ENCODE measurements at regions of chr1 and their contacts with region 1.

Region 1: DNA sequence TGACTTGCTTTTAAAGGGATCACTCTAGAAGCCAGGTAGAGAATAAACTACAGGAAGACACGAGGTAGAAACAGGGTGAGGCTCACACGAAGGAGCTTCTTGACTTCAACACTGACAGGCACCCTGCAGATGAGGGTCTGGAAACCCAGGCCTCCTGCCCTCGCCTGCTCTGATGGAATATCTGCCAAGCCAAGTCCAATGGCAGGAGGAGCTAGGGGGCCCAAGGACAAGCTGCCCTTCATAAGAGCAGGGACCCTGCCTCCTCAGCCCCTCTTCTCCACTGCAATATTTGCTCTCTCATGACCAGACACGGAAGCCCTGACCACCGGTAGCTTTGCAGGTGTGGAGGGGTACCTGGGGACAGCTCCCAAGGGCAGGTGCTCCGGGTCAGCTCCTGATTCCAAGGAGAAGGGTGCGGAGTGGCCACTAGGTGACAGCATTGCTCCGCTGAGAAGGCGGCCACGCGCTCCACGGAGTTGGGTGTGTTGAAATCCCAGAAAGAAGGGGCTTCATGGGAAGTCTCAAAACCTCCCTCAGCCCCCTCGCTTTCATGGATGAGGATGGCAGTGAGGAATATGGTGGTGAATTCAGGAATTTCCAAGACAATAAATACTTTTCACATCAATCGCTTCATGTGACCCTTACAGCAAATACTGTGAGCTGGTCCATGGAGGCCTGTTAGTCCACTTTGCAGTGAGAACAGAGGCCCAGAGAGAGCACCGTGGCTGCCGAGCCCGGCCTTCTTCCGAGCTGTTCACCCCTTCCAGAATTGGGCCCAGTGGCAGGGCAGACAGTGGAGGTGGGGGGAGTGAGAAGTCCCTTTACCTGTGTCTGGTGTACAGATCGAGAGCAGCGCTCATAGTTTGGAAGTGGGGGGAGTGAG is 33.2 kb upstream of the PAX7 start:
- DNase-seq: peak; percentile 33 to 41
- ATAC-seq: peak; percentile 95 to 96
- H3K4me3 ChIP-seq: no peak overlapping the region
- H3K27ac ChIP-seq: 0 out of 6 replicates have a peak overlapping the region, but pooled peaks of 1 of the 2 experiments have one; percentile 8
- H3K4me1 ChIP-seq: 0 out of 3 replicates have a peak, but pooled peaks cover 3% of the 10 kb centered on the region
- CTCF ChIP-seq: peak; percentile 87
- EP300 ChIP-seq: no peak
- POLR2A ChIP-seq: no peak
- RAD21 ChIP-seq: peak; percentile 96 to 98

Region 2: GRCh38 chr1:18539171-18539570 is 58.2 kb before region 1 on chr1:
- CTCF ChIA-PET with region 1: no interaction called
- POLR2A ChIA-PET with region 1: no interaction called
- DNase-seq: no peak
- ATAC-seq: no peak
- H3K4me3 ChIP-seq: no peak overlapping the region
- H3K27ac ChIP-seq: no peak overlapping the region
- H3K4me1 ChIP-seq: no peaks in the 10 kb centered on the region
- CTCF ChIP-seq: no peak
- EP300 ChIP-seq: no peak
- POLR2A ChIP-seq: no peak
- RAD21 ChIP-seq: no peak

Region 3: DNA sequence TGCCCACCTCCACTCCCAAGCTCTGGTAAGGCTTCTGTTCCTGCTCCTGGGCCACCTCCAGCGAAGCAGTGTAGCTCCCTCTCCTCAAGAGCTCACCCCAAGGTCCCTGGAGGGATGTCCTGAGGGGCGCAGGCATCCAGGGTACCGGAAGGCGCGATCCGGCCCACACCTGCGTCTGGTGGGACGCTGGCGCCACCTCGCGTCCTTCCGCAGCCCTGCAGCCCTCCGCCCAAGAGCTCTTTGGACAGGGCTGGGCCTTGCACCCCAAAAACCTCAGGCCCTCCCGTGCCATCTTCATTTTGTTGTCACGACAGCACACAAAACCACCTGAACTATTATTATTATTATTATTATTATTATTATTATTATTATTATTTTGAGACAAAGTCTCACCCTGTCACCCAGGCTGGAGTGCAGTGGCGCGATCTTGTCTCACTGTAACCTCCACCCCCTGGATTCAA is 16.0 kb before region 1 on chr1:
- CTCF ChIA-PET with region 1: interaction called, 76 read pairs
- POLR2A ChIA-PET with region 1: no interaction called
- DNase-seq: peak; percentile 37 to 55
- ATAC-seq: peak; percentile 67 to 90; a peak in 5 of 6 replicates
- H3K4me3 ChIP-seq: no peak overlapping the region
- H3K27ac ChIP-seq: no peak overlapping the region
- H3K4me1 ChIP-seq: no peaks in the 10 kb centered on the region
- CTCF ChIP-seq: peak; percentile 70
- EP300 ChIP-seq: no peak
- POLR2A ChIP-seq: no peak
- RAD21 ChIP-seq: peak; percentile 85 to 87

Region 4: GRCh38 chr1:18668796-18669404 is 71.5 kb after region 1 on chr1:
- CTCF ChIA-PET with region 1: interaction called, 24 read pairs
- POLR2A ChIA-PET with region 1: no interaction called
- DNase-seq: peak; percentile 92 to 93
- ATAC-seq: peak; percentile 95 to 97
- H3K4me3 ChIP-seq: no peak overlapping the region
- H3K27ac ChIP-seq: peak overlapping the region; percentile 89 to 97
- H3K4me1 ChIP-seq: peaks cover 58% of the 10 kb centered on the region
- CTCF ChIP-seq: no peak
- EP300 ChIP-seq: peak in 1 of 2 experiments; percentile 46; a peak in 1 of 5 replicates
- POLR2A ChIP-seq: no peak
- RAD21 ChIP-seq: no peak

Region 5: GRCh38 chr1:18693256-18694098 is 96.1 kb after region 1 on chr1:
- CTCF ChIA-PET with region 1: interaction called, 13 read pairs
- POLR2A ChIA-PET with region 1: no interaction called
- DNase-seq: no peak
- ATAC-seq: no peak
- H3K4me3 ChIP-seq: no peak overlapping the region
- H3K27ac ChIP-seq: no peak overlapping the region
- H3K4me1 ChIP-seq: no peaks in the 10 kb centered on the region
- CTCF ChIP-seq: no peak
- EP300 ChIP-seq: no peak
- POLR2A ChIP-seq: no peak
- RAD21 ChIP-seq: no peak

Region 6: DNA sequence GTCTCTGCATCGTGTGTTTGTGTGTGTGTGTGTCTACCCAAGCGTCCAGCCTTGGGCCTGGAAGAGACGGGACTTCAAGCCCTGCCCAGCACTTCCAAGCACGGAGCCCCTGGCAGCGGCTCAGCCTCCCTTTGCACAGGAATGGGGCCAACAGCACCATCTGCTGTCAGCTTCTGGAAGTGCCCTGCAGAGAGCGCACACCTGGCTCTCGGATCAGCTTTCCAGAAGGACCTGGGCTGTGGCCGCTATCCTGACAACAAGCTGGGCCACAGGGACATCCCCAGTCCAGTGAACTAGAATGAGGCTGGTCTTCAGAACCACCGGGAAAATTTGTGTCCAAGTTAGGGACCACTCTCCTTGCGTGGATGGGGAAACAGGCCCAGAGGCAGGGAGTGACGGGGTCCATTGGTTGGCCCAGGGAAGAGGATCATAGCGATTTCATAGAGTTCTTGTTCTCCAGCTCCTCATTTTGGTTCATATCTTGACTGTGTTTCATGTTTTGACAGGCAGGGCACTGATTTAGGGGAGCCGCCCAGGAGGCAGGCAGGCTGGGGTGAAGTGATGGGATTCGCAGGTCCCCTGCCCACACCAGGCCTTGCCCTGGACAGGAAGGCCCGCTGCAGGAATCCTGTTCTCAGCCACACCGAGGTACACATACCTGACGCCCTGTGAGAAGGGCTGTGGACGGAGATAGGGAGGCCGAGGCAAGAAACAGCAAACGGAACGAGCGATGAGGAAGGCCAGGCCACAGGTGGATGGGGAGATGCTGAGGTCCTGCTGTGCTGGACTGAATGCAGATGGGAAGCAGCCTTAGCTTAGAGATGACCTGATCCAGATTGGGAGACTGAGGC is 223.6 kb after region 1 on chr1:
- CTCF ChIA-PET with region 1: interaction called, 236 read pairs
- POLR2A ChIA-PET with region 1: no interaction called
- DNase-seq: peak; percentile 60
- ATAC-seq: peak; percentile 82 to 96; a peak in 5 of 6 replicates
- H3K4me3 ChIP-seq: no peak overlapping the region
- H3K27ac ChIP-seq: no peak overlapping the region
- H3K4me1 ChIP-seq: no peaks in the 10 kb centered on the region
- CTCF ChIP-seq: peak; percentile 64
- EP300 ChIP-seq: no peak
- POLR2A ChIP-seq: no peak
- RAD21 ChIP-seq: peak; percentile 77 to 80

Region 7: DNA sequence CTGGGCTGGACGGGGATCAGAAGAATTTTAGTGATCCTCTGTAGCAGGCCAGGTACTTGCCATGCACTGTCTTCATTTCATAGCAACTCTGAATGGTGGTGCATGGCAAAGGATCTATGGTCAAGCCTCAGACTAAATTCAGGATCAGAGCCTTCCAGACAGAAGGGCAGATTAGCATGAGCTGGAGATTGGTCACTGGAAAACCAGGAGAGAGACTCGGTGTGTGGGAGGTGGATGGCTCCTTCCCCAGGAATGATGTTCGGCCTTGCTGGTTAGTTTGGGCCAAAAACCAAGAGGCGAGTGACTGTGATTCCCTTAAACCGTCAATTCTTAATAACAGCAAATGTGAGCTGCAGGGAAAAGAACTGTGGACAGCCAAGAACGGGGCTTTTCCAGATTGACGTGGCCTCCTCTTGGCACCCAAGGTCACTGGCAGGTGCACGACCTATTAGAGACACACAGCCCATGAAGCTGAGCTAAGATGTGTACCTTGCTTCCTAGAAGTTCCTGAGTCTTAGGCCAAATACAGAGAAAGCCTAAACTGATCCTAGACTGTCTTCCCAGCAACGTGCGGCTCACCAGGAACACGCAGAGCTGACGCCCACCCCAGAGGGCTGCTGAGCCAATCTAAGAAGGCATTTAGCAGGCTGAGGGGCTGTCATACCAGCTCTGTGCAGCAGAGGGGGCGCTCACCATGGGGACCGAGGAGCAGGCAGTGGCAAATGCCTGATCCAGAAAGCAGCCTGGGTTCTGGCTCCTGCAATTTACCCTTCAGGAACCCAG is 286.4 kb after region 1 on chr1:
- CTCF ChIA-PET with region 1: interaction called, 73 read pairs
- POLR2A ChIA-PET with region 1: no interaction called
- DNase-seq: peak; percentile 50 to 61
- ATAC-seq: peak; percentile 73 to 90
- H3K4me3 ChIP-seq: no peak overlapping the region
- H3K27ac ChIP-seq: no peak overlapping the region; a peak in 1 of 6 replicates
- H3K4me1 ChIP-seq: peaks cover 9% of the 10 kb centered on the region; the same call in 2 of the 3 replicates
- CTCF ChIP-seq: peak; percentile 63
- EP300 ChIP-seq: no peak
- POLR2A ChIP-seq: no peak
- RAD21 ChIP-seq: peak; percentile 77 to 81

Measured in A549 (cell line).